Transverse colon (tissue), 4 donors: ENCODE measurements at regions of chr15 and their contacts with region 1.

Region 1: GRCh38 chr15:59879506-59880265 is 124.4 kb upstream of the FOXB1 start:
- DNase-seq: no peak
- H3K4me3 ChIP-seq: no peak overlapping the region
- H3K27ac ChIP-seq: no peak overlapping the region
- H3K4me1 ChIP-seq: no peaks in the 10 kb centered on the region
- H3K27me3 ChIP-seq: peaks cover 7% of the 10 kb centered on the region
- CTCF ChIP-seq: no peak
- EP300 ChIP-seq: no peak
- POLR2A ChIP-seq: no peak

Region 2: GRCh38 chr15:59587068-59587826 is 292.4 kb before region 1 on chr15:
- in situ Hi-C with region 1: no loop called
- intact Hi-C with region 1: no loop called
- DNase-seq: no peak
- H3K4me3 ChIP-seq: no peak overlapping the region
- H3K27ac ChIP-seq: peak overlapping the region in 3 of 4 donors; percentile 18 to 36 (median 33)
- H3K4me1 ChIP-seq: peaks cover 0 to 33% (median 12%) of the 10 kb centered on the region in 4 donors
- H3K27me3 ChIP-seq: no peaks in the 10 kb centered on the region
- CTCF ChIP-seq: no peak
- EP300 ChIP-seq: no peak
- POLR2A ChIP-seq: no peak

Region 3: GRCh38 chr15:59833366-59833765 is 46.3 kb before region 1 on chr15:
- in situ Hi-C with region 1: no loop called
- intact Hi-C with region 1: no loop called
- DNase-seq: no peak
- H3K4me3 ChIP-seq: no peak overlapping the region
- H3K27ac ChIP-seq: no peak overlapping the region
- H3K4me1 ChIP-seq: no peaks in the 10 kb centered on the region
- H3K27me3 ChIP-seq: peaks cover 6% of the 10 kb centered on the region
- CTCF ChIP-seq: no peak
- EP300 ChIP-seq: no peak
- POLR2A ChIP-seq: no peak

Region 4: DNA sequence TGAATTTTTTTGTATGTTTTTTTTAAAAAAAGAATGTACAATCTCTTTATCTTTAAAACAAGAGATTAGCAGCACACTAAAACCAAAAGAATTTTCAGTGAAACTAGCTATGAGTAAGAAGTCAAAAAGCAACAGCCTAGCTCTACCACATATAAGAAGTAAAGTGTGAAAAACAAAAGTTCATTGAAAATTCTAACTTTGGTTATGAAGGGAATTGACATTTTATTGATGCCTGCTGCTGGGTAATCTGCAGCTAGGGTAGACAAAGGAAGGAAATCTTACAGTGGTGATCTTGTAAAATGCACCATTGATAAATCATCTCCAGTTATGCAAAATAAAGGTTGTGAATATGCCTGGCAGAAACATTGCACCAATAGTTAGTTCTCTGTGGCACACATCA is 86.6 kb after region 1 on chr15:
- in situ Hi-C with region 1: no loop called
- intact Hi-C with region 1: loop called (anchors 10 kb)
- DNase-seq: no peak
- H3K4me3 ChIP-seq: no peak overlapping the region
- H3K27ac ChIP-seq: no peak overlapping the region
- H3K4me1 ChIP-seq: no peaks in the 10 kb centered on the region
- H3K27me3 ChIP-seq: no peaks in the 10 kb centered on the region
- CTCF ChIP-seq: no peak
- EP300 ChIP-seq: no peak
- POLR2A ChIP-seq: no peak